Dorsolateral prefrontal cortex (tissue), 120 donors: ENCODE measurements at regions of chr6 and their contacts with region 1.

Region 1: DNA sequence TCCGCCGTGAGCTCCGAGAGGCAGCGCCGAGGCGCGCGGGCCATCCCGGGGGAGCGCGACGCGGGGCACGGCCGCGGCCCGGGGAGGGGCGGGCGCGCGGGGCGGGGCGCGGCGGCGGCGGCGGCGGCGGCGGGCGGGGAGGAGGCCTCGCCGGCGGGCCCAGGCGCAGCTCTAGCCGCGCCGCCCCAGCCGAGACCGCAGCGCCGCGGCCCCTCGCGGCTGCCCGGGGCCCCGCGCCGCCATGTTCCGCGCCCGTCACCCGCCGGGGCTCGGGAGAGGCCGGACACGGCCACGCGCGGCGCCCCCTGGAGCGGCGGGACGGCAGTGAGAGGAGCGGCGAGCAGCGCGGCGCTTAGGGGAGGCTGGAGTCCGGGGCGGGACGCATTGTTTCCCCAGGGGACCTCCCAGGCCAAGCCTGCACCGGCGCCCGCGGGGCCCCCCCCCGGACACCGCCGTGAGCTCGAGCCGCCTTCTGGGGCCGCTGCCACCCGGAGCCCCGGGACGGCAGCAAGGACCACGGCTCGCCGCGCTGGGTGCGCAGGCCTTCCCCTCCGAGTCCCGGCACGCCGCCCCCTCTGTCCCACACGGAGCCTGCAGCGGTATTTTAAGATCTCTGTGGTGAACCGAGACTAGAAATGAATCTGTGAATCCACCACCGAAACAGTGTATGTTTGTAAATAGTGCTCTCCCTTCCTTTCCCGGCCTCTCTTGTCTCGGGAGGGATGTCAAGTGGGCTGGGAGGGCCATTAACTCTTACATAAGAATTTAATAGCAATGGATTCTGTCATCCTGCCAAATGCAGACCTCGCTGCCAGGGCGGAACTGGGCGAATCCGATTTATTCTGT is at the start of gene KIF13A:
- DNase-seq: peak; percentile 50 to 82 (median 66)
- H3K4me3 ChIP-seq: peak within 1 kb of the TSS; percentile 60 to 92 (median 79)
- H3K27ac ChIP-seq: peak within 1 kb of the TSS; percentile 91 to 100 (median 99)
- H3K27me3 ChIP-seq: no peaks in the 10 kb centered on the region
- CTCF ChIP-seq: peak in 36 of 56 donors; percentile 11 to 48 (median 30)
- total RNA-seq, gene KIF13A: 29.7 to 89.7 (median 51.6) TPM

Region 2: GRCh38 chr6:17816921-17817611 is 170.7 kb before region 1 on chr6:
- intact Hi-C with region 1: loop called in 1 of 2 experiments (anchors 5 kb)
- DNase-seq: no peak
- H3K4me3 ChIP-seq: no peak overlapping the region
- H3K27ac ChIP-seq: peak overlapping the region in 4 of 59 donors; percentile 1 to 20 (median 16)
- H3K27me3 ChIP-seq: no peaks in the 10 kb centered on the region
- CTCF ChIP-seq: peak in 9 of 56 donors; percentile 5 to 21 (median 10)

Region 3: DNA sequence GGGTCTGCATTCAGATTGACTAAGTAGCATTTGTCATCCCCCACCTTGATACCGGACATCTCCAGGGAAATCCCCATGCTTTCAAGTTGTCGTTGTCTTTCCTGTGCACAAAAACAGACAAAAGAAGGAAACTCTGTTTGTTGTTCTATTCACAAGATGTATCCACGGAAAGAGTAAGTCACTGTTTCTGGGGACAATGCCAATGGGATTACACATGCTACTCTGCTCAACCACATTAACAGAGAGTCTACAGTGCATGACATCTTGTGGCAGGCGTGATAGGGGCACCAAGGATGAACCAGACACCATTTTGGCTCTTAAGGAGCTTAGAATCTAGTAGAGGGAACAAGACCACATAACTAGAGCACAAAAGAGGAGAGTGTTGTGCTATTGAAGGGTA is 156.7 kb before region 1 on chr6:
- intact Hi-C with region 1: loop called (anchors 5 kb)
- DNase-seq: peak in 1 of 10 donors; percentile 14
- H3K4me3 ChIP-seq: peak overlapping the region in 1 of 59 donors; percentile 3
- H3K27ac ChIP-seq: peak overlapping the region in 57 of 59 donors; percentile 13 to 88 (median 75)
- H3K27me3 ChIP-seq: no peaks in the 10 kb centered on the region
- CTCF ChIP-seq: peak in 3 of 56 donors; percentile 5 to 23 (median 15)

Region 4: GRCh38 chr6:17865798-17866725 is 121.7 kb before region 1 on chr6:
- intact Hi-C with region 1: loop called (anchors 2 to 5 kb)
- DNase-seq: peak in 9 of 10 donors; percentile 47 to 88 (median 74)
- H3K4me3 ChIP-seq: peak overlapping the region in 1 of 59 donors; percentile 17
- H3K27ac ChIP-seq: peak overlapping the region; percentile 74 to 98 (median 93)
- H3K27me3 ChIP-seq: no peaks in the 10 kb centered on the region
- CTCF ChIP-seq: peak in 2 of 56 donors; percentile 12 to 22

Region 5: DNA sequence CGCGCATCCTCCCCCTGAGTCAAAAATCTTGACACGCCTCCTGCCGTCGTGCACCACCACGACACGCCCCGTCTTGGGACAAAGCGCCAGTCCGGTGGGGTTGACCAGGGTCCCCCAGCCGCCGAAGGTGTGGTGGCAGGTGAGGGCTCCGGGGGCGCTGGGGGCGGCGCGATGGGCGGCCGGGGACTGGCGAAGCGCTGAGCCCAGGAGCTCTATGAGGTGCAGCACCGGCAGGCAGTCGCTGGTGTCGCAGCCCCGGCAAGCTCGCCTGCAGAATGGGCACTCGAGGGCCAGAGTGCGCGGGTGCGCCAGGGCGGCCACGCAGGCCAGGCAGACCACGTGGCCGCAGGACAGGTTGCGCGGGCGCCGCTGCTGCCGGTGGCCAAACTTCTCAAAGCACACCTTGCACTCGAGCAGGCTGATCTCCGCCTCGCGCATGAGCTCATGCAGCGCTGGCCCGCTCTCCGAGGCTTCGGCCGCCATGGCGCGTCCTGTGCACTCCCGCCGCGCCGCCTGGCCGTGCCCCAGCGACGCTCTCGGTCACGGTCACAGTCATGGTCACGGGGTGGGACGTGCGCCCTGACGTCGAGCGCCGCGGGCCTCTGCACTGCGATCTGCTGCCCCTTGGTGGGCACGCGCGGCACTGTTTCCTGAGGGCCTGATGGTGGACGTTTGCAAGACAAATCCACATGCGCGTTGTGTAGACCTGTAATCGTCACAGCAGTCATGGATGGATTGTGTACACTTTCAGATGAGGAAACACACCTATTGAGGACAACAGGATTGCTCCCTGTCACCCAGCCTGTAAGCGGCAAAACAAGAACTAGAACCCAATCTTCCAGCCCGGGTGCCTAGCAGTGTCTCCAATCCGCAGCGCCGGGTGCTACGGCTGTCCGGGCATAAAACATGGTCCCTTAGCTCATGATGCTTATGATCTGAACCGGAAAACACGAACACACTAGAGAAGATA is 134.6 kb after region 1 on chr6 and contains the start of gene NHLRC1:
- intact Hi-C with region 1: loop called (anchors 1 to 2 kb)
- DNase-seq: peak; percentile 86 to 93 (median 89)
- H3K4me3 ChIP-seq: peak within 1 kb of the TSS; percentile 38 to 90 (median 70)
- H3K27ac ChIP-seq: peak within 1 kb of the TSS in 56 of 59 donors; percentile 16 to 93 (median 76)
- H3K27me3 ChIP-seq: no peaks in the 10 kb centered on the region
- CTCF ChIP-seq: peak; percentile 83 to 99 (median 97)
- total RNA-seq, gene NHLRC1: 2.5 to 7.7 (median 4.4) TPM

Region 6: GRCh38 chr6:18135181-18135812 is 147.5 kb after region 1 on chr6:
- intact Hi-C with region 1: no loop called
- DNase-seq: no peak
- H3K4me3 ChIP-seq: no peak overlapping the region
- H3K27ac ChIP-seq: no peak overlapping the region
- H3K27me3 ChIP-seq: no peaks in the 10 kb centered on the region
- CTCF ChIP-seq: no peak

Region 7: DNA sequence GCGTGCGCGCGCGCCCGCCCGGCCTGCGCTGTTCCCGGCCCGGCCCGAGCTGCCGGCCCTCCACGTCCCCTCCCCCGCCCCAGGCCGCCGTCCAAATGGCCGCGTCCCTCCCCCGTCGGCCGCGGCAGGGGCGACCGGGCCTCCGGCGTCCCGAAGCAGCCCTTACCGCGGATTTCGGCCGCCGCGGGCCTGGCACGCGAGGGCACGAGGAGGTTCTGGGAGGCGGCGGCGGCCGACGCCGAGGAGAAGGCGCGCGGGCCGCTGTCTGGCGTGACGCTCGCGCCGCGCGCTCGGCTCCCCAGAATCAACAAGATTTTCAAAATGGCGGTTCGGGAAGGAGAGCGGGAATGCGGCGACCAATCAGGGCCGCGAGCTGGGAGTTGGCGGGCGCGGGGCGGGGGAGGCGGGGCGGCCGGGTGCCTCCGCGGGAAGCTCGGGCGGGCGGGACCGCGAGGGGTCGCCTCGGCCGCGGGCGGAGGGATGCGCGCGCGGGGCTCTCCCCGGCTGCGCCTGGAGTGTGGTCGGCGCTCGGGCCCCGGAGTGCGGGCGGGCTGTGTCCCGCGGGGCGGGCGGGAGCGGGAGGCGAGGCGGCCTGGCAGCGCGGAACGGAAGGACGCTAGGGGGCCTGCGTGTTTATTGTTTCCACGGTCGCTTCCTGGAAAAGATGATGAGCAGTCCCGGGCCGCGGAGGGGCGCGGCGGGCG is 276.6 kb after region 1 on chr6 and contains the start of gene DEK:
- intact Hi-C with region 1: loop called (anchors 10 kb)
- DNase-seq: peak; percentile 82 to 89 (median 84)
- H3K4me3 ChIP-seq: peak within 1 kb of the TSS; percentile 50 to 96 (median 88)
- H3K27ac ChIP-seq: peak within 1 kb of the TSS; percentile 33 to 99 (median 93)
- H3K27me3 ChIP-seq: no peaks in the 10 kb centered on the region
- CTCF ChIP-seq: peak; percentile 29 to 85 (median 65)
- total RNA-seq, gene DEK: 37.6 to 70.7 (median 50.7) TPM